Caco-2 (cell line): ENCODE measurements at regions of chr1 and their contacts with region 1.

Region 1: DNA sequence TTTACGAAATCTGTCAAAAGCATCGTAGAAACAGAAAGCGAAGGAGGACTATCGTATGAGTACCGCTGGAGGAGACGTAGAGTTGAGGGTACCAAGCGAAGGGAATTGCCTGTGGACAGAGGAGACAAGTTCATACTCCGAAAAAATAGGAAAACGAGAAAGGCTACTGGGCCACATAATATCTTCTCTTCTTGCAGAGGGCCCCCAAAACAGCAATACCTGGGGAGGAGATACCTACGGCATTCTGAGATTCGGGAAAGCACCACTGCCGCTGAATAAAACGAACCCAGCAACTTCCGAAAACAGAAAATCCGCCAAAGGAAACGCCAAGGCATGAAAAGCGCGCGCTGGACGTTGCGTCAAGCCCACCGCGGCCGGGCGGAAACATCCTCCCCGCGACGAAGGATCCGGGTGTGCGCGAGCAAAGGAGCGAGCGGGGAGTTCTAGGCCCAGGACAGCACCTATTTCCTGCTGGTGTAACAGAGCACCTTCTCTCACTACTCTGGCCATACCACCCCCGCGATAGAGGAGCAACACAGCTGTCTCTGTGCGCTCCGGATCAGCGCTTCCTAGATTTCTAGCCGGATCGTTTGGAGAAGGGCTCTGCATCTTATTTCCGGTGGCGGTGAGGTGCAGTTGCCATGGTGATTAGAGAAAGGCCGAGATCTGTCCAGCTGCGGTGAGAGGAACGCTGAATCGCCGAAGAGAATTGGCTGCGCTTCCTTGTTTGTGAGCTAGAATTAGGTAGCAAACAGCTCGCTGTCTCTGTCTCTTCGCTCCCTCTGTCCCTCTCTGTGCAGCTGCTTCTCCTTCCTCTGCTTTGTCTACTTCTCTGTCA is at the starts of genes EFCAB7 and ITGB3BP:
- DNase-seq: peak; percentile 84 to 91
- H3K4me3 ChIP-seq: peak within 1 kb of the TSS; percentile 69
- H3K4me3 Mint-ChIP-seq: peak within 1 kb of the TSS; percentile 82
- H3K27ac Mint-ChIP-seq: peak within 1 kb of the TSS; percentile 89
- H3K4me1 ChIP-seq: 0 out of 2 replicates have a peak, but pooled peaks cover 6% of the 10 kb centered on the region
- H3K4me1 Mint-ChIP-seq: no peaks in the 10 kb centered on the region
- H3K27me3 ChIP-seq: no peaks in the 10 kb centered on the region
- H3K27me3 Mint-ChIP-seq: no peaks in the 10 kb centered on the region
- CTCF ChIP-seq: no peak
- total RNA-seq, gene EFCAB7: 2.1 and 3.2 TPM in 2 replicates
- total RNA-seq, gene ITGB3BP: 23.6 and 25.7 TPM in 2 replicates

Region 2: GRCh38 chr1:63466759-63467158 is 56.4 kb before region 1 on chr1:
- CTCF ChIA-PET with region 1: no interaction called
- POLR2A ChIA-PET with region 1: no interaction called
- intact Hi-C with region 1: loop called (anchors 1 kb)
- DNase-seq: peak in 1 of 2 experiments; percentile 7
- H3K4me3 ChIP-seq: no peak overlapping the region
- H3K4me3 Mint-ChIP-seq: no peak overlapping the region
- H3K27ac Mint-ChIP-seq: no peak overlapping the region
- H3K4me1 ChIP-seq: no peaks in the 10 kb centered on the region
- H3K4me1 Mint-ChIP-seq: no peaks in the 10 kb centered on the region
- H3K27me3 ChIP-seq: no peaks in the 10 kb centered on the region
- H3K27me3 Mint-ChIP-seq: no peaks in the 10 kb centered on the region
- CTCF ChIP-seq: no peak